IMR-90 (cell line): ENCODE measurements at regions of chr2 and their contacts with region 1.

Region 1: GRCh38 chr2:181891258-181891965 is at the start of gene ITPRID2:
- DNase-seq: peak; percentile 89
- ATAC-seq: peak; percentile 97
- H3K4me3 ChIP-seq: peak within 1 kb of the TSS; percentile 98
- H3K27ac ChIP-seq: peak within 1 kb of the TSS; percentile 98
- H3K4me1 ChIP-seq: peaks cover 3% of the 10 kb centered on the region; the same call in 1 of the 2 replicates
- H3K27me3 ChIP-seq: no peaks in the 10 kb centered on the region
- CTCF ChIP-seq: peak; percentile 44; the same call in 1 of the 2 replicates
- POLR2A ChIP-seq: no peak
- RAD21 ChIP-seq: no peak
- total RNA-seq, gene ITPRID2: 168 and 187 TPM in 2 replicates

Region 2: GRCh38 chr2:181742922-181743722 is 148.3 kb before region 1 on chr2:
- CTCF ChIA-PET with region 1: interaction called, 3 read pairs
- POLR2A ChIA-PET with region 1: no interaction called
- dilution Hi-C with region 1: no loop called
- in situ Hi-C with region 1: no loop called
- intact Hi-C with region 1: loop called (anchors 1 kb)
- DNase-seq: peak; percentile 73
- ATAC-seq: peak; percentile 77
- H3K4me3 ChIP-seq: no peak overlapping the region
- H3K27ac ChIP-seq: no peak overlapping the region
- H3K4me1 ChIP-seq: no peaks in the 10 kb centered on the region; the same call in 1 of the 2 replicates
- H3K27me3 ChIP-seq: no peaks in the 10 kb centered on the region
- CTCF ChIP-seq: peak; percentile 77
- POLR2A ChIP-seq: no peak
- RAD21 ChIP-seq: peak; percentile 80

Region 3: DNA sequence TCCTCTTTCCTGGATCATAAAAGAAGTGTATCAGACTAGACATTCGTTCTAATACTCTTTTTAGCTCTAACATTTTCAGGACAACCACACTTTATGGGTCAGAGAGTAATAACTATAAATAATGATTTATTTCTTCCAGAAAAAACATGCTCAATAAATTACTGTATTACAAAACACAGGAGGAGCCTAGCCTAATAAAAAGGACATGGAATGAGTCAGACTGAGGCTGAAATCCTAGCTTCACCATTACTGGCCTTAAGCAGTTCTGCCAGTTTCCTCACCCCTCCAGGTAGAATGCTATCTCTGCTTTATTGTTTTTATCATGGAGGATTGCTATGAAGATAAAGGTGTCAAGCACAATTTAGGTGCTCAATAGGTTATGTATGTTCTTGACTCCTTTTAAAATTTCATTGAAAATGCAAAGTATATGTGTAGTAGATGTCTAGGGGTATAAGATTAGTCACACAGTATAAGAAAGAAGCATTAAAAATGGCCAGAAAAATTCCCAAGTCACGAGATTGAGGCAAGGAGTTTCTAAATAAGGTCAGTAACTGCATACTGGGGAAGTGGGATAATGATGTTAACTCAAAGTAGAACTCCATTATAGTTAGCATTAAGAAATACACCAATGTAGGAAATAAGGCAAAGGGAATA is 105.6 kb before region 1 on chr2:
- CTCF ChIA-PET with region 1: no interaction called
- POLR2A ChIA-PET with region 1: interaction called, 6 read pairs
- dilution Hi-C with region 1: no loop called
- in situ Hi-C with region 1: no loop called
- intact Hi-C with region 1: loop called (anchors 5 kb)
- DNase-seq: peak; percentile 75
- ATAC-seq: peak; percentile 57
- H3K4me3 ChIP-seq: no peak overlapping the region
- H3K27ac ChIP-seq: no peak overlapping the region
- H3K4me1 ChIP-seq: peaks cover 11% of the 10 kb centered on the region; the same call in 1 of the 2 replicates
- H3K27me3 ChIP-seq: no peaks in the 10 kb centered on the region
- CTCF ChIP-seq: no peak
- POLR2A ChIP-seq: no peak
- RAD21 ChIP-seq: no peak

Region 4: DNA sequence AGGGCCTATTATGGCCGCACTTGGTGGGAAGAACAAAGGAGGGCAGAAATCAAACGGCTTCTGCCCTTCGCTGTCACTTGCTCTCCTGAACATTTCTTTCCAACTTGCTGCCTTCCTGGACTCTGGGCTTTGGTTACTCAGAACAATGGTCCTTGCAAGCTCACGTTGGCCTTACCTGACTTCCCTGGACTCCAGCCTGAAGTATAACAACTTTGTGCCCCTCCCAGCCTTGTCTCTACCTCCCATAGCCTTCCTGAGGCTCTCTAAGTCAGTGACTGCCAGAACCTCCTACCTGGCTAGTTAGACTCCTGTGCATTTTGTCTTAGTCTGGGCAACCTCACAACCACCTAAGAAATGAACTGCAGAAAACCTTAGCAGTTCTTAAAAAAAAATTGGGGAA is 30.0 kb before region 1 on chr2:
- CTCF ChIA-PET with region 1: no interaction called
- POLR2A ChIA-PET with region 1: no interaction called
- dilution Hi-C with region 1: no loop called
- in situ Hi-C with region 1: no loop called
- intact Hi-C with region 1: no loop called
- DNase-seq: no peak
- ATAC-seq: no peak
- H3K4me3 ChIP-seq: no peak overlapping the region
- H3K27ac ChIP-seq: no peak overlapping the region
- H3K4me1 ChIP-seq: no peaks in the 10 kb centered on the region
- H3K27me3 ChIP-seq: no peaks in the 10 kb centered on the region
- CTCF ChIP-seq: no peak
- POLR2A ChIP-seq: no peak
- RAD21 ChIP-seq: no peak

Region 5: GRCh38 chr2:182228073-182228473 is 336.7 kb after region 1 on chr2:
- CTCF ChIA-PET with region 1: no interaction called
- POLR2A ChIA-PET with region 1: no interaction called
- dilution Hi-C with region 1: no loop called
- in situ Hi-C with region 1: no loop called
- intact Hi-C with region 1: no loop called
- DNase-seq: no peak
- ATAC-seq: no peak
- H3K4me3 ChIP-seq: no peak overlapping the region
- H3K27ac ChIP-seq: no peak overlapping the region
- H3K4me1 ChIP-seq: peaks cover under 1% of the 10 kb centered on the region; the same call in 1 of the 2 replicates
- H3K27me3 ChIP-seq: no peaks in the 10 kb centered on the region
- CTCF ChIP-seq: no peak
- POLR2A ChIP-seq: no peak
- RAD21 ChIP-seq: no peak